ENCODE measurements at regions of chrX and their contacts with region 1.

Region 1: GRCh38 chrX:154748712-154749343 is 2.0 kb downstream of the GAB3 start:
- DNase-seq: no peak
- H3K4me3 ChIP-seq: no peak overlapping the region
- H3K27ac ChIP-seq: peak overlapping the region; percentile 7 to 67 (median 57)
- H3K4me1 ChIP-seq: peaks cover 0 to 23% (median 20%) of the 10 kb centered on the region in 4 donors
- H3K27me3 ChIP-seq: no peaks in the 10 kb centered on the region
- CTCF ChIP-seq: peak; percentile 70 to 76 (median 76)
- EP300 ChIP-seq: no peak
- POLR2A ChIP-seq: no peak

Region 2: GRCh38 chrX:154714925-154715324 is 33.9 kb before region 1 on chrX:
- intact Hi-C with region 1: loop called (anchors 5 kb)
- DNase-seq: no peak
- H3K4me3 ChIP-seq: no peak overlapping the region
- H3K27ac ChIP-seq: no peak overlapping the region
- H3K4me1 ChIP-seq: peaks cover 0 to 32% (median 4%) of the 10 kb centered on the region in 4 donors
- H3K27me3 ChIP-seq: no peaks in the 10 kb centered on the region
- CTCF ChIP-seq: peak; percentile 63 to 77 (median 74)
- EP300 ChIP-seq: no peak
- POLR2A ChIP-seq: no peak

Region 3: DNA sequence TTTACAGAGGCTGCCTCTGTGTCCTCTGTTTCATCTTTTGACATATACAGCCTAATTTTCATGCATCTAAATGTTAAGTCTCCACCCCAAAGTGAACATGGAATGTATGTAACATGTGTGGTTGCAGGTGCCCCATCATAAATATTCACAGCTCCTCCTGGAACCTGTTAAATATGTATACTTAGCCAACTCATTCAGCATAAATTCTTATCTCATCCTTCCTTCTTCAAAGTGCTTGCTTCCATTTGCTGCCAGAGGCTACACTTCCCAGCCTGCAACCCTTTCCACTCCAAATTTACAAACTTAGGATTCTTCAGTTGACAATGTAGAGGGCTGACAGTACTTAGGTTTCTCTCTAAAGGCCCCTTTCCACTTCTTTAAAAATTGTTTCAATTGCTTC is 213.1 kb after region 1 on chrX:
- intact Hi-C with region 1: no loop called
- DNase-seq: no peak
- H3K4me3 ChIP-seq: no peak overlapping the region
- H3K27ac ChIP-seq: no peak overlapping the region
- H3K4me1 ChIP-seq: no peaks in the 10 kb centered on the region
- H3K27me3 ChIP-seq: no peaks in the 10 kb centered on the region
- CTCF ChIP-seq: no peak
- EP300 ChIP-seq: no peak
- POLR2A ChIP-seq: no peak